ENCODE measurements at regions of chr12 and their contacts with region 1.

Region 1: DNA sequence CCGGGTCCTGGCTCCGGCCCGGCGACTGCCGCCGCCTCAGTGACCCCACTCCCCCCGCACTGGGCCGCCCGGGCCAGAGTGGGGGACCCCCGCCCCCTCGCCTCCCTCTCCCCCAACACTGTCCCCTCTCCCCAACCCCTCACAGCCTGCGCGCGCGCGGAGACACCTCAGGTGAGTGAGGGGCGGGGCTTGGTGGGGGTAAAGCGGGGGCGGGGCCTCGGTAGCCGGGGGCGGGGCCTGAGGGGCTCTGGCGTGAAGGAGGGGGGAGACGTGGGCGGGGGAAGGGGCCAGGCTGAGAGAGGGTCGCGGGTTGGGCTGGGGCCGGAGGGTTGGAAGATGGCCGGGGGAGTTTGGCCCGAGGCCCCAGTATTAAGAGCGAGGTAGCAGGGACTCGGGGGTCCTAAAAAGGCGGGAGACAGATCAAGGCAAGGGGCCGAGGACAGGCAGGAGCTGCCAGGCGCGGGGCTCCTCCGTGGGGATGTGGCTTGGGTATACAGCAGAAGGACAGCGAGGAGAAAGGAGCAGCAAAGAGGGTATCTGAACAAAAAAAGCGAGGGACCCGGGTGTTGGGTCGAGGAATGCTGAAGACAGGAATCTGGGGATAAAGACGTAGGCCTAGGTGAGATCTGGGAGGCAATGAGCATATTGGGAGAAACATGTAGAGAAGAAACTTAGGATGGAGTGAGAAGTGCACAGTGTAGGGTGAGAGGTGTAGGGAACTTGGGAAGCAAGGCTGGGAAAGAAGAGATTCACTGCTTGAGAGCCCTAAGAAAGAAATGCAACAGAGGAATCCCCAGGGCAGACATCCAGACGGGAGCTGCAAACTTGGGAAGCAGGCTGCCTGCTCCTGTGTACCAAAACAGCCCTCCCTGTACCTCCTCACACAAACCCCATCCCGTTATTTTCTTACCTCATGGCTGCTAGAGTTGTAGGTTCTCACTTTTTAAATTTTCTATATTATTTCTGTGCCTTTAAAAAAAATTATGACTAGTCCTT is 10.8 kb downstream of the SUOX start:
- DNase-seq: peak in 1 of 2 experiments; percentile 65
- H3K4me3 ChIP-seq: peak overlapping the region; percentile 63
- H3K27ac ChIP-seq: peak overlapping the region; percentile 52; the same call in 1 of the 2 replicates
- H3K4me1 ChIP-seq: peaks cover 13% of the 10 kb centered on the region
- H3K27me3 ChIP-seq: no peaks in the 10 kb centered on the region
- CTCF ChIP-seq: no peak

Region 2: GRCh38 chr12:55817346-55818139 is 190.3 kb before region 1 on chr12 and contains the starts of genes ORMDL2 and SARNP:
- CTCF ChIA-PET with region 1: no interaction called
- POLR2A ChIA-PET with region 1: interaction called, 10 read pairs
- intact Hi-C with region 1: no loop called
- DNase-seq: peak; percentile 96 to 99
- H3K4me3 ChIP-seq: peak within 1 kb of the TSS; percentile 72
- H3K27ac ChIP-seq: peak within 1 kb of the TSS; percentile 51
- H3K4me1 ChIP-seq: peaks cover 18% of the 10 kb centered on the region
- H3K27me3 ChIP-seq: no peaks in the 10 kb centered on the region
- CTCF ChIP-seq: no peak
- total RNA-seq, gene ORMDL2: 22.5 and 22.9 TPM in 2 replicates
- total RNA-seq, gene SARNP: 65.6 and 74.8 TPM in 2 replicates

Measured in PC-9 (cell line).